Natural killer cell (primary cell): ENCODE measurements at regions of chr4 and their contacts with region 1.

Region 1: GRCh38 chr4:56467284-56468096 is at the start of gene SRP72:
- DNase-seq: peak; percentile 85 to 95
- ATAC-seq: peak; percentile 96 to 99 (median 96)
- H3K4me3 ChIP-seq: peak within 1 kb of the TSS; percentile 81
- H3K4me3 Mint-ChIP-seq: peak within 1 kb of the TSS; percentile 99
- H3K27ac ChIP-seq: peak within 1 kb of the TSS; percentile 85
- H3K27ac Mint-ChIP-seq: peak within 1 kb of the TSS; percentile 97 to 99
- H3K4me1 ChIP-seq: peaks cover 16% of the 10 kb centered on the region
- H3K4me1 Mint-ChIP-seq: peaks cover 53 to 55% of the 10 kb centered on the region in 2 donors
- H3K27me3 ChIP-seq: no peaks in the 10 kb centered on the region
- H3K27me3 Mint-ChIP-seq: no peaks in the 10 kb centered on the region
- CTCF ChIP-seq: no peak
- total RNA-seq, gene SRP72: 102 to 131 (median 120) TPM

Region 2: GRCh38 chr4:56038487-56039148 is 428.9 kb before region 1 on chr4:
- intact Hi-C with region 1: no loop called
- DNase-seq: no peak
- ATAC-seq: no peak
- H3K4me3 ChIP-seq: no peak overlapping the region
- H3K4me3 Mint-ChIP-seq: no peak overlapping the region
- H3K27ac ChIP-seq: no peak overlapping the region
- H3K27ac Mint-ChIP-seq: no peak overlapping the region
- H3K4me1 ChIP-seq: no peaks in the 10 kb centered on the region
- H3K4me1 Mint-ChIP-seq: no peaks in the 10 kb centered on the region
- H3K27me3 ChIP-seq: no peaks in the 10 kb centered on the region
- H3K27me3 Mint-ChIP-seq: peaks cover 3 to 8% of the 10 kb centered on the region in 2 donors
- CTCF ChIP-seq: no peak

Region 3: GRCh38 chr4:56387023-56388001 is 80.2 kb before region 1 on chr4 and contains the start of gene AASDH:
- intact Hi-C with region 1: loop called (anchors 1 kb)
- DNase-seq: peak; percentile 97 to 98
- ATAC-seq: peak; percentile 84 to 92 (median 86)
- H3K4me3 ChIP-seq: peak within 1 kb of the TSS; percentile 73
- H3K4me3 Mint-ChIP-seq: peak within 1 kb of the TSS; percentile 98
- H3K27ac ChIP-seq: peak within 1 kb of the TSS; percentile 94
- H3K27ac Mint-ChIP-seq: peak within 1 kb of the TSS; percentile 98 to 99
- H3K4me1 ChIP-seq: peaks cover 11% of the 10 kb centered on the region
- H3K4me1 Mint-ChIP-seq: peaks cover 24 to 31% of the 10 kb centered on the region in 2 donors
- H3K27me3 ChIP-seq: no peaks in the 10 kb centered on the region
- H3K27me3 Mint-ChIP-seq: no peaks in the 10 kb centered on the region
- CTCF ChIP-seq: no peak
- total RNA-seq, gene AASDH: 9.5 to 14.2 (median 9.6) TPM

Region 4: GRCh38 chr4:56445699-56446098 is 21.8 kb before region 1 on chr4:
- intact Hi-C with region 1: no loop called
- DNase-seq: no peak
- ATAC-seq: no peak
- H3K4me3 ChIP-seq: no peak overlapping the region
- H3K4me3 Mint-ChIP-seq: no peak overlapping the region
- H3K27ac ChIP-seq: no peak overlapping the region
- H3K27ac Mint-ChIP-seq: no peak overlapping the region
- H3K4me1 ChIP-seq: no peaks in the 10 kb centered on the region
- H3K4me1 Mint-ChIP-seq: no peaks in the 10 kb centered on the region
- H3K27me3 ChIP-seq: no peaks in the 10 kb centered on the region
- H3K27me3 Mint-ChIP-seq: no peaks in the 10 kb centered on the region
- CTCF ChIP-seq: no peak